H1 (cell line): ENCODE measurements at regions of chr18 and their contacts with region 1.

Region 1: DNA sequence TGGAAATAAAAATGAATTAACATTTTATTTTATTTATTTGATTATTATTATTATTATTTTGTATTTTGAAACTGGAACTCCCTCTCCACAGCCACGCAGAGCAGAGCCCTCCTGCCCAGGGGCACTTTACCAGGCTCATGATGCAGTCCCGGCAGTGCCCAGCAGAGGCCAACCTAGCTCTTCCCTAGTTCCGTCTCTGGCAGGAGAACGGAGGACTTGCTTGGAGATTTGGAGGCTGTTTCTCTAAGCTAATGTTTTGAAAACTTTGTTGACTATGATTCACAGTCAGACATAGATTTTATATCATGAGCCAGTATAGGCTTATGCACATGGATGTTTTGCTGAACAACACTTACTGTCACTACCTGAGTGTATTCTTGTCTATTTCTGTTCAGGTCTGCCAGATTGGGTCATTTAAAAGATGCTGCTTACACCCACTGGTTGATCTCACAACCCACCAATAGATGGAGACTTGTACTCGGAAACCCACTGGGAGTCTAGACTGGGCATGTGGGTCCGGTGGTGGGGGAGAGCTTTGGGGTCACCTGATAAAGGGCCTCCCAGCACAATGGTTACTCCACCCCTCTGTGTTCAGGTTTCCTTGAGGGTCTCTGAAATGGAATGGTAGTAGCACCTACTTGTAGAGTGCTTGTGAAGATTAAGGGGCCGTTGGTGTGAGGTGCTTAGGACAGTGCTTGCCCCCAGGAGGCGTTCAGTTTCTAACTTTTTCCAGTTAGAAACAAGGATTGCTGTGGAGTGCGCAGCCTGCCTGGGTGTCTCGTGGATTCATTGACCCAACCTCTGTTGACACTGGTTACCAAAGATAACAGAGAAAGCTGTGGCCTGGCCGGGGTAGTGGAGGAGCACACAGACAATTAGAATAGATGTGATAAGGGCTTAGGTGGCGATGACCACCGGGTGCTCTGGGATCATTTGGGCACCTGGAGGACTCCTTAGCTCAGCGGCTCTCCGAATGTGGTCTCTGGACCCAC is 177.3 kb downstream of the HAUS1 start:
- DNase-seq: peak; percentile 50 to 88
- H3K4me3 ChIP-seq: no peak overlapping the region
- H3K27ac ChIP-seq: no peak overlapping the region
- H3K4me1 ChIP-seq: peaks cover 6 to 9% (median 7%) of the 10 kb centered on the region in 4 experiments; a peak in 6 of 7 replicates
- H3K27me3 ChIP-seq: no peaks in the 10 kb centered on the region
- CTCF ChIP-seq: peak; percentile 76 to 95 (median 94)
- EP300 ChIP-seq: no peak
- POLR2A ChIP-seq: no peak
- RAD21 ChIP-seq: peak; percentile 92 to 93

Region 2: DNA sequence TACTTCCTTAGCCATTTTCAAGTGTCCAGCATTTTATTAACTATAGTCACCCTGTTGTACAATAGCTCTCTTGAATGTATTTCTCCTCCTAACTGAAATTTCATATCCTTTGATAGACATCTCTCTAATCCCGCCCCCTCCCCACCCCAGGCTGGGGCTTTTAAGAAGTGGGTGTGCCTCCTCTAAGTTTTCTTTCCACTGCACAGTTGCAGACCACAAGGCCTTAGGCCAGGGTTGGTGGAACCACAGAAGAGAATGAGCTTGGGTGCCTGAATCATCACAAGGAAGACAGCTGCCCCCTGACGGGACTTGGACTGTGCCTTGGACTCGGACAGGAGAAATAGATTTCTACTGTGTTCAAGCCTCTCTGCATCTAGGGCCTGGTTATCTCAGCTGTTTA is 16.1 kb after region 1 on chr18:
- CTCF ChIA-PET with region 1: interaction called, 46 read pairs
- POLR2A ChIA-PET with region 1: interaction called, 9 read pairs
- DNase-seq: no peak
- H3K4me3 ChIP-seq: no peak overlapping the region
- H3K27ac ChIP-seq: no peak overlapping the region
- H3K4me1 ChIP-seq: peaks cover 5 to 10% (median 9%) of the 10 kb centered on the region in 4 experiments
- H3K27me3 ChIP-seq: no peaks in the 10 kb centered on the region
- CTCF ChIP-seq: no peak
- EP300 ChIP-seq: no peak
- POLR2A ChIP-seq: no peak
- RAD21 ChIP-seq: no peak

Region 3: GRCh38 chr18:46369323-46369722 is 87.8 kb after region 1 on chr18:
- CTCF ChIA-PET with region 1: interaction called, 148 read pairs
- POLR2A ChIA-PET with region 1: interaction called, 6 read pairs
- DNase-seq: no peak
- H3K4me3 ChIP-seq: no peak overlapping the region
- H3K27ac ChIP-seq: no peak overlapping the region
- H3K4me1 ChIP-seq: peaks cover 0 to 9% (median 0%) of the 10 kb centered on the region in 4 experiments; a peak in 1 of 7 replicates
- H3K27me3 ChIP-seq: no peaks in the 10 kb centered on the region
- CTCF ChIP-seq: peak; percentile 48 to 79 (median 68)
- EP300 ChIP-seq: no peak
- POLR2A ChIP-seq: no peak
- RAD21 ChIP-seq: peak; percentile 60 to 67

Region 4: GRCh38 chr18:46418663-46419260 is 137.3 kb after region 1 on chr18:
- CTCF ChIA-PET with region 1: interaction called, 12 read pairs
- POLR2A ChIA-PET with region 1: no interaction called
- DNase-seq: no peak
- H3K4me3 ChIP-seq: no peak overlapping the region
- H3K27ac ChIP-seq: no peak overlapping the region
- H3K4me1 ChIP-seq: peaks cover 14 to 27% (median 21%) of the 10 kb centered on the region in 4 experiments
- H3K27me3 ChIP-seq: no peaks in the 10 kb centered on the region; a peak in 1 of 7 replicates
- CTCF ChIP-seq: no peak
- EP300 ChIP-seq: no peak
- POLR2A ChIP-seq: no peak
- RAD21 ChIP-seq: no peak

Region 5: DNA sequence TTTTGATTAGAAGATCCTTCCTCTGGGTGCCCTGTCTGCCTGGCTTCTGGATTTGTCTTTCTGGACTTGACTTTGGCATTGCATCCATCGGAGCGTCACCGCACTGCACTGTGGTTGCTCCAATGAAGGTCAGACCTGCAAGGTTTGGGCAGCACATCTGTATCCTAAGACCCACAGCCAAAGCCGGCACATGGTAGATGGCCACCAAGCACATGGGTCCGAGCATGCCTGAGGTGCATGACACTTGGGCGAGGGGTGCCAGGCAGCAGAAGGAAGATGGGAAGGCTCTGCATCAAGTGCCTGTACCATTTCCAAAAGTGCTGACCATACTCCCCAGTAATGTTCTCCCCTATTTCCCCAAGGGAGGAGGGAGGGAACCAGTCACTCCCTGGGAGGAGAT is 225.5 kb after region 1 on chr18:
- CTCF ChIA-PET with region 1: interaction called, 49 read pairs
- POLR2A ChIA-PET with region 1: no interaction called
- DNase-seq: no peak
- H3K4me3 ChIP-seq: no peak overlapping the region
- H3K27ac ChIP-seq: no peak overlapping the region
- H3K4me1 ChIP-seq: no peaks in the 10 kb centered on the region
- H3K27me3 ChIP-seq: no peaks in the 10 kb centered on the region; a peak in 1 of 7 replicates
- CTCF ChIP-seq: no peak
- EP300 ChIP-seq: no peak
- POLR2A ChIP-seq: no peak
- RAD21 ChIP-seq: no peak; a peak in 1 of 4 replicates

Region 6: DNA sequence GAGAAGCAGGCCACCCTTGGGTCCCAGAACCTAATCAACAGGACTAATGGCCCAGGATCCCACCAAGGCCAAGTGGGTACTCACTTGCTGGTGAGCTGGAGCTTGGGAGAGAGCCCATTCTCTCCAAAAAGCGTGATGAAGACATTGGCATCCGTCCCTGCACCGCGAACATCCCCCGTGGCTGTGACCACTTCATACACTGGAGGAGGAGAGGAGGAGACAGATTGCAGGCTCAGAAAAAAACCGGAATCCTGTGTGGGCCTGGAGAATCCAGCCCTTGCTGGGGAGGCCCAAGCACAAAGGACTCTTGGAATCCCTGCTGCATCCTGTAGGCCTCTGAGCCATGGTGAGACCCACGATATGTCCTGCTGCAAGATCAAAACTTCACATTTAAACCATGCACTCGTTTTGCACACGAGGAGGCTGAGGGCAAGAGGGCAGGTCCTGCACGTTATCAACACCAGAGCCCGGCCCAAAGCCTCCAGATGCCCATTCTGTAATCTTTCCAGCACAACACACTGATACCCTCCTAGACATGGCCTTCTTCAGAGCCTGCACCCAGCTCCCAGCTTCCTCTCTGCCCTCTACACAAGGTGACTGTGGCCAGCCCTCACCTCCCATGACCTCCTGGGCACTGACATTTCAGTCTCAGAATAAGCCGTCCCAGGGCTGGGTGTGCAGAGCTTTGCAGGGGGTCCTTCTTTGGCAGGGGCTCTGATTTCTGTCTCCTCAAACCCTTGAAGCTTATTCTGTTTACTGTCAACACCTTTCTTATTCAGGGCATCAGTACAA is 367.8 kb after region 1 on chr18:
- CTCF ChIA-PET with region 1: interaction called, 22 read pairs
- POLR2A ChIA-PET with region 1: no interaction called
- DNase-seq: no peak
- H3K4me3 ChIP-seq: no peak overlapping the region
- H3K27ac ChIP-seq: no peak overlapping the region
- H3K4me1 ChIP-seq: no peaks in the 10 kb centered on the region; a peak in 1 of 7 replicates
- H3K27me3 ChIP-seq: no peaks in the 10 kb centered on the region
- CTCF ChIP-seq: no peak
- EP300 ChIP-seq: no peak
- POLR2A ChIP-seq: no peak
- RAD21 ChIP-seq: no peak